Gastrocnemius medialis (tissue), 4 donors: ENCODE measurements at regions of chr1 and their contacts with region 1.

Region 1: GRCh38 chr1:67626495-67627235 is 58.3 kb upstream of the GADD45A start:
- DNase-seq: no peak
- ATAC-seq: no peak
- H3K4me3 ChIP-seq: no peak overlapping the region
- H3K27ac ChIP-seq: no peak overlapping the region
- H3K4me1 ChIP-seq: peaks cover 10% of the 10 kb centered on the region in 2 donors
- H3K27me3 ChIP-seq: no peaks in the 10 kb centered on the region
- CTCF ChIP-seq: no peak
- POLR2A ChIP-seq: no peak

Region 2: GRCh38 chr1:67646145-67647035 is 19.7 kb after region 1 on chr1:
- in situ Hi-C with region 1: no loop called
- intact Hi-C with region 1: loop called (anchors 2 kb)
- DNase-seq: peak in 1 of 2 donors; percentile 20
- ATAC-seq: peak; percentile 10 to 31
- H3K4me3 ChIP-seq: no peak overlapping the region
- H3K27ac ChIP-seq: peak overlapping the region; percentile 24 to 51 (median 46)
- H3K4me1 ChIP-seq: peaks cover 23 to 27% of the 10 kb centered on the region in 2 donors
- H3K27me3 ChIP-seq: no peaks in the 10 kb centered on the region
- CTCF ChIP-seq: no peak
- POLR2A ChIP-seq: no peak